ENCODE measurements at regions of chr11 and their contacts with region 1.

Region 1: GRCh38 chr11:124882339-124883071 is 15.2 kb downstream of the ROBO4 start:
- DNase-seq: no peak

Region 2: GRCh38 chr11:124829986-124830385 is 52.5 kb before region 1 on chr11:
- intact Hi-C with region 1: no loop called
- DNase-seq: no peak

Region 3: GRCh38 chr11:126268708-126269579 is 1386.4 kb after region 1 on chr11 and contains the starts of genes FOXRED1 and SRPRA:
- intact Hi-C with region 1: loop called in 1 of 2 experiments (anchors 10 kb)
- DNase-seq: peak; percentile 100
- total RNA-seq, gene FOXRED1: 10.3 to 16.1 TPM
- total RNA-seq, gene SRPRA: 79.7 to 82.0 TPM